Psoas muscle (tissue), 8 donors: ENCODE measurements at regions of chr2 and their contacts with region 1.

Region 1: DNA sequence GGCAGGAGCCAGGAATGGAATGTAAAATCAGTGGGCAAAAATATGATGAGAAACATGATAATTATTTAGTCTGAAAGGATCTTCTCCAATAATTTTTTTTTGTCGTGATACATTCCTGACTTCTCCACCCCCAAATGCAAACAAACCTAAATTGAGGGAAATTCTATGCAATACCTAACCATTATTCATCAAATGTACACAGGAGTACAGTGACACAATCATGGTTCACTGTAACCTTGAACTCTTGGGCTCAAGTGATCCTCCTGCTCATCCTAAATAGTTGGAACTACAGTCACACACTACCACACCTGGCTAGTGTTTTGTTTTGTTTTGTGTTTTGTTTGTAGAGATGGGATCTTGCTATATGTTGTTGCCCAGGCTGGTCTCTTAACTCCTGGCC is 46.5 kb downstream of the RAB10 start:
- DNase-seq: no peak
- ATAC-seq: no peak
- H3K4me3 ChIP-seq: no peak overlapping the region
- H3K27ac ChIP-seq: no peak overlapping the region
- H3K4me1 ChIP-seq: peaks cover 24% of the 10 kb centered on the region
- H3K27me3 ChIP-seq: no peaks in the 10 kb centered on the region
- CTCF ChIP-seq: no peak

Region 2: DNA sequence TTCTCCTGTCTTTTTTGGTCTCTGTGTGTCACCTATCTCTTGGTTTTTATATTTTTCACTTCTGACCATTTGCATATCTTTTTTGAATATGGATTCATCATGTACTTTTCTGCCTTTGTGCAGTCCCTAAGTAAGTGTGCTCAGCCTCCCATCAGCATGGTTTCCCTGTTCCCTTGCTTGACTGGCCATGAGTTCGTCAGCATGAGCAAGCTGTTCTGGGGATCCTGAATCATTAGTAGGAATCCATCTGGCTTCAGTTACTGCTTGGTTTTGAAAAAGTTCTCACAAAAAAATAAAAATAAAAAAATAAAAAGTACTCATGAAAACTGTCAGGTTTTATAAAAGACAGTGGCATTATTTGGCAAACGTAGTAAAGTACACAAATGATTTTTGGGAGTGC is 1445.2 kb before region 1 on chr2:
- intact Hi-C with region 1: no loop called
- DNase-seq: no peak
- ATAC-seq: peak in 2 of 4 donors; percentile 71 to 77
- H3K4me3 ChIP-seq: no peak overlapping the region
- H3K27ac ChIP-seq: no peak overlapping the region
- H3K4me1 ChIP-seq: peaks cover 5% of the 10 kb centered on the region
- H3K27me3 ChIP-seq: no peaks in the 10 kb centered on the region
- CTCF ChIP-seq: no peak

Region 3: GRCh38 chr2:26033818-26034636 is 46.3 kb before region 1 on chr2 and contains the start of gene RAB10:
- intact Hi-C with region 1: loop called in 1 of 2 experiments (anchors 5 kb)
- DNase-seq: peak; percentile 100
- ATAC-seq: peak; percentile 93 to 97 (median 94)
- H3K4me3 ChIP-seq: peak within 1 kb of the TSS; percentile 97
- H3K27ac ChIP-seq: peak within 1 kb of the TSS; percentile 98
- H3K4me1 ChIP-seq: peaks cover 27% of the 10 kb centered on the region
- H3K27me3 ChIP-seq: no peaks in the 10 kb centered on the region
- CTCF ChIP-seq: no peak
- total RNA-seq, gene RAB10: 131 to 164 (median 149) TPM

Region 4: DNA sequence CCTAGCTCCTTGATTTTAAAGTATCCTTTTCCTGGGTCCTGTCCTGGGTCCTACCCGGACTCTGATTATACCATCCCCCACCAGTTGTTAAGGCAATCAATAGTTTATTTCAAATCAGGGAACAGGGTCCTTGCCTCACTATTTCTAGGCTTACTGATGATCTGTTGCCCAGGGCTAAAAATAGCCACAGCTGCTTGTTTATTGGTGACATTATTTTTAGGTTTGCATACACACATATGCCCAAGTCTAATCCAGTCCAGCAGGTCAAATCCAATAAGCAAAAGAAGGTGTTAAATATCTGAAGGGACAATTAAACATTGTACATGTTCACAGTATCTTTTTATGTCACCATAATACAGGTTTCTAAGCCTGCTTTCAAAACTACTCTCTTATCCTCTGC is 19.6 kb after region 1 on chr2:
- intact Hi-C with region 1: loop called in 1 of 2 experiments (anchors 1 kb)
- DNase-seq: no peak
- ATAC-seq: peak; percentile 61 to 89 (median 86)
- H3K4me3 ChIP-seq: peak overlapping the region; percentile 39
- H3K27ac ChIP-seq: peak overlapping the region; percentile 84
- H3K4me1 ChIP-seq: peaks cover 62% of the 10 kb centered on the region
- H3K27me3 ChIP-seq: no peaks in the 10 kb centered on the region
- CTCF ChIP-seq: no peak